BJ (cell line): ENCODE measurements at regions of chr12 and their contacts with region 1.

Region 1: DNA sequence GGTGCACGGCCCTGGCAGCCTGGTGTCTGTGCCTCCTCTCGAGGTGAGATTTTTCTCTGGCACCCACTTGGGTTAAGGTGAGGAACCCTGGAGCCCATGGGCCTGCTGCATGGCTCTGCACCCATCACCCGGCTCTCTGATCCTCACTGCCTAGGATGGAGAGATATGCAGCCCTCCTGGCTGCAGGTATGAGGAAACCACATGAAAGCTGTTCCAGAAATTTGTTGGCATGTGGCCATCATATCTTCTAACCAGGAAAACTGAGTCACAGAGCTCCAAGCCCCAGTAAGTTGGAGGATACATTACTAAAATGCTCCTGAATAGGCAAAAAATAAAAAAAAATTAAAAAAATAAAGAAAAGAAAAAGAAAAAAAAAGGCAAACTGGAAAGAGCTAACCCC is 39.3 kb upstream of the DDX11 start:
- DNase-seq: no peak
- H3K4me3 ChIP-seq: no peak overlapping the region
- H3K27me3 ChIP-seq: peaks cover 3% of the 10 kb centered on the region
- CTCF ChIP-seq: no peak

Region 2: DNA sequence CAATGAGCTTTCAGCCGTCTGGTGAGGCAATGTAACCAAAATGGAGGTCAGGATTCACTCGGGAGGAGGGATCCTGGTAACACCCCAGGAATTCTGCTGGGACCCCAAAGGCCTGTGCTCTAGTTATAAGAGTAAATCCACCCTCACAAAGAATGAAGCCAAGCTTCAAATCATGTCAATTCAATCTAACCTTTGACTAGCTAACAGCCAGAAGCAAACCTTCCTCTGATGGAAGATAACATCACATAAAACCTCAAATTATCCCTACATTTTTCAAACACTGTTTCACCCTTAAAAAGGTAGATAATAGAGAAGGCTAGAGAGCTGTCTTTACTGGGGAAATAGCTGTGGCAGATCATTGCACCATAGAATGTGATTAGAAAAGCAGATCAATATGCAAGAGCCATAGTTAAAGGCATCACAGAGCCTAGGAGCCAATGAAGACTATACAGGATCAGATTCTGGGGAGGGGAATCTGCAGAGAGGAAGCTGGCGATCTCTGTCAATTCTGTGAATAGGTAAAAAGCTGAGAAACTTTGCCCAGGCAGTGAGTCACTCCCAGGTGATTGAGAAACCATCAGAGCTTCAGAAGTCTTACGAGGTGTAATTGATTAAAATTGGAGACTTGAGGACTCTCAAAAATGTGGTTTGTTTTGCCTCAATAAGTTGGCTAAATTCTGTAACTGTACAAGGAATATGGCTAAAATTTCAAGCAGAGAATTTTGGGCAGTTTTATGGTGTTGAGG is 149.7 kb before region 1 on chr12:
- CTCF ChIA-PET with region 1: no interaction called
- POLR2A ChIA-PET with region 1: no interaction called
- DNase-seq: no peak
- H3K4me3 ChIP-seq: no peak overlapping the region
- H3K27me3 ChIP-seq: no peaks in the 10 kb centered on the region
- CTCF ChIP-seq: no peak

Region 3: GRCh38 chr12:30985814-30986452 is 48.4 kb before region 1 on chr12:
- CTCF ChIA-PET with region 1: no interaction called
- POLR2A ChIA-PET with region 1: no interaction called
- DNase-seq: no peak
- H3K4me3 ChIP-seq: no peak overlapping the region
- H3K27me3 ChIP-seq: 0 out of 2 replicates have a peak, but pooled peaks cover 1% of the 10 kb centered on the region
- CTCF ChIP-seq: peak; percentile 92

Region 4: GRCh38 chr12:31011746-31012566 is 22.4 kb before region 1 on chr12:
- CTCF ChIA-PET with region 1: interaction called, 3 read pairs
- POLR2A ChIA-PET with region 1: interaction called, 10 read pairs
- DNase-seq: no peak
- H3K4me3 ChIP-seq: no peak overlapping the region
- H3K27me3 ChIP-seq: no peaks in the 10 kb centered on the region; the same call in 1 of the 2 replicates
- CTCF ChIP-seq: 0 out of 2 replicates have a peak, but pooled peaks have one; percentile 23